ENCODE measurements at regions of chr2 and their contacts with region 1.

Region 1: GRCh38 chr2:203804070-203804469 is 63.5 kb upstream of the CTLA4 start:
- DNase-seq: no peak
- H3K4me3 Mint-ChIP-seq: peak overlapping the region; percentile 19
- H3K27ac Mint-ChIP-seq: peak overlapping the region; percentile 76
- H3K4me1 Mint-ChIP-seq: peaks cover 80% of the 10 kb centered on the region
- H3K27me3 Mint-ChIP-seq: peaks cover 2% of the 10 kb centered on the region

Region 2: GRCh38 chr2:203599509-203599908 is 204.6 kb before region 1 on chr2:
- intact Hi-C with region 1: loop called (anchors 1 kb)
- DNase-seq: no peak
- H3K4me3 Mint-ChIP-seq: peak overlapping the region; percentile 37
- H3K27ac Mint-ChIP-seq: no peak overlapping the region
- H3K4me1 Mint-ChIP-seq: peaks cover 39% of the 10 kb centered on the region
- H3K27me3 Mint-ChIP-seq: peaks cover 59% of the 10 kb centered on the region

Region 3: DNA sequence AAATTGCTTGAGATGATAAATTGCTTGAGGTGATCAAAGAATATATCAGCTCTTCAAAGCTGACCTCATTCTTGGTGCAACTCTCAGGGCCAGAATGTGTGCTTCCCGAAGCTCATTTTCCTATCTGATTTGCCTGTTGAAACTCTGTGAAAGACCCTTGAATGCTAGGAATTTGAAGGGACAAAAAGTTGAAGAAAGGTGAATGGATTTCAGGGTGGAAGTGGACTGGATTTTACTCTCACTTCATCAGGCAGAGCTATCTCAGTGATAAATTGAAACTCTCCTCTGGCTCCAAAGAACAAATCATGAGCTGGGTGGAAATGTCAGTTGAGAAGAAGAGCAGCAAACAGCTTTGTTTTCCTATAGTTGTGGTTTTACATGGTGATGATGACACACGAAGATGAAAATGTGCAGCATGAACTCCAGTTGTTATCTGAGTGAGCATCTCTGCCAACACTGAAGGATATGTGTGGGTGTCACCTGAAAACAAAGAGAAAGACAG is 63.2 kb before region 1 on chr2:
- intact Hi-C with region 1: loop called (anchors 1 kb)
- DNase-seq: peak; percentile 66
- H3K4me3 Mint-ChIP-seq: peak overlapping the region; percentile 67
- H3K27ac Mint-ChIP-seq: peak overlapping the region; percentile 97
- H3K4me1 Mint-ChIP-seq: peaks cover 78% of the 10 kb centered on the region
- H3K27me3 Mint-ChIP-seq: no peaks in the 10 kb centered on the region

Region 4: DNA sequence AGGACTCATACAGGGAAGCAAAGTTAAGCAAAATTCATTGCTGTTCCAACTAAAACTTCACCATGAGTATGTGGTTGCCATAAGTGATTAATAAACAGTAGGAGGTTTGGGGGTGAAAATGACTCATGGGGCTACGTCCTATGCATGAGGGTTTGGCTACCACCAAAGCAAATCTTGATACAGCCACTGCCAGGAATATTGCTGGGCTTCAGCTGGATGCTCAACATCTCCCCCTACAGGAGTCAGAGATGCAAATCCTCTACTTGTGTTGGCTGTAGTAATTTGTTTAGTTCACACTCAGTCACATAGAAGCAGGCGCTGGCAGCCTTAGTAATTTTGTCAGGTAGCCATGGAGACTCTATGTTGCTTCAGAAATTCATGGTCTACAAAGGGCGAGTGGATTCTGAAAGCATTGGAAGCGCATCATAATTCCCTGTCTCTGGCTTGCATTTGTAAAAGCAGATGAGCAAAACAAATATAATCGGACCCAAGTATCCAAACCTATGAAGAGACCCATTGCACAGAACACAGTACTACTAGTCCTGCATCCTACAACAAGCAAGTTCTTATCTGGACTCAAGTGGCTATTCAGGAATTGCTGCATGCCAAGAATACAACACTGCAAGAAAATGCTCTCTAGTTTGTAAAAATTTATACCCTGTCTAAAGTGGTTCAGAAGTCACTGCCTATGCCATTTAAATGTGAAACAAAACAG is 21.7 kb before region 1 on chr2:
- intact Hi-C with region 1: loop called (anchors 1 kb)
- DNase-seq: peak; percentile 50
- H3K4me3 Mint-ChIP-seq: no peak overlapping the region
- H3K27ac Mint-ChIP-seq: peak overlapping the region; percentile 92
- H3K4me1 Mint-ChIP-seq: peaks cover 63% of the 10 kb centered on the region
- H3K27me3 Mint-ChIP-seq: no peaks in the 10 kb centered on the region

Region 5: GRCh38 chr2:203893401-203893800 is 89.3 kb after region 1 on chr2:
- intact Hi-C with region 1: loop called (anchors 5 kb)
- DNase-seq: no peak
- H3K4me3 Mint-ChIP-seq: no peak overlapping the region
- H3K27ac Mint-ChIP-seq: peak overlapping the region; percentile 89
- H3K4me1 Mint-ChIP-seq: peaks cover 73% of the 10 kb centered on the region
- H3K27me3 Mint-ChIP-seq: no peaks in the 10 kb centered on the region

Measured in activated T-helper 1 cell treated with anti-CD3 and anti-CD28 coated beads, Interleukin-12 subunit alpha, Interleukin-12 subunit beta, Interleukin-2, Interleukin-4 antibody, amounts not matched to agents 30 ng/mL and 10 ng/mL and 1 ng/mL, durations not matched to agents 14 hours and 24 hours and 36 hours (primary cell).